Activated CD4-positive, alpha-beta memory T cell treated with anti-CD3 and anti-CD28 coated beads for 36 hours (primary cell): ENCODE measurements at regions of chr10 and their contacts with region 1.

Region 1: GRCh38 chr10:94607111-94607510 is 61.5 kb downstream of the HELLS start:
- DNase-seq: no peak
- H3K4me3 Mint-ChIP-seq: no peak overlapping the region
- H3K27ac Mint-ChIP-seq: peak overlapping the region; percentile 72
- H3K4me1 Mint-ChIP-seq: peaks cover 23% of the 10 kb centered on the region
- H3K27me3 Mint-ChIP-seq: no peaks in the 10 kb centered on the region

Region 2: GRCh38 chr10:94591461-94592205 is 15.5 kb before region 1 on chr10:
- CTCF ChIA-PET with region 1: no interaction called
- POLR2A ChIA-PET with region 1: interaction called, 3 read pairs
- intact Hi-C with region 1: loop called (anchors 1 kb)
- DNase-seq: no peak
- H3K4me3 Mint-ChIP-seq: no peak overlapping the region
- H3K27ac Mint-ChIP-seq: peak overlapping the region; percentile 84
- H3K4me1 Mint-ChIP-seq: peaks cover 23% of the 10 kb centered on the region
- H3K27me3 Mint-ChIP-seq: no peaks in the 10 kb centered on the region